Endothelial cell of umbilical vein (primary cell): ENCODE measurements at regions of chr7 and their contacts with region 1.

Region 1: DNA sequence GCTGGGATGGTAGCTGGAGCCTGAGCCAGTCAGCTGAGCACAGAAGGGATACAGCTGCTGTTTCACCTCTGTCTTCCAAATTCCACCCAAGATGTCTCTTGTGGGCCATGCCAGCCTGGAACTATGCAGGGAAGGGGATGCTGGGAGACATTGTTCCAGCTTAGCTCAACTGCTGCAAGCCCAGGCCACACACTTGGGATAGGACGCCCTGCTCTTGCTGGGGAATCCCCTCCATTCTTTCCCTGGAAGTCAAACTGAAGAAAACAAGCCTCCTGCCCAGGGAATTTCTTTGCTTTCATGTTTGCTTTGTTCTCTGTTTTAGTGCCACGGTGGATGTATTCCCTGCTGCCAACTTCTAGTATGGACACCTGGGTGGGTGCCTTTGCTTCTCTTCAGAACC is 55.2 kb upstream of the CDK13 start:
- DNase-seq: peak; percentile 19
- H3K4me3 ChIP-seq: no peak overlapping the region
- H3K27ac ChIP-seq: no peak overlapping the region
- H3K4me1 ChIP-seq: no peaks in the 10 kb centered on the region
- H3K27me3 ChIP-seq: peaks cover 22 to 28% of the 10 kb centered on the region in 2 experiments
- CTCF ChIP-seq: no peak
- POLR2A ChIP-seq: no peak

Region 2: GRCh38 chr7:39880556-39880955 is 14.3 kb before region 1 on chr7:
- CTCF ChIA-PET with region 1: interaction called, 37 read pairs
- POLR2A ChIA-PET with region 1: no interaction called
- dilution Hi-C with region 1: no loop called
- intact Hi-C with region 1: no loop called
- DNase-seq: no peak
- H3K4me3 ChIP-seq: no peak overlapping the region
- H3K27ac ChIP-seq: no peak overlapping the region
- H3K4me1 ChIP-seq: no peaks in the 10 kb centered on the region
- H3K27me3 ChIP-seq: no peaks in the 10 kb centered on the region
- CTCF ChIP-seq: no peak
- POLR2A ChIP-seq: no peak

Region 3: DNA sequence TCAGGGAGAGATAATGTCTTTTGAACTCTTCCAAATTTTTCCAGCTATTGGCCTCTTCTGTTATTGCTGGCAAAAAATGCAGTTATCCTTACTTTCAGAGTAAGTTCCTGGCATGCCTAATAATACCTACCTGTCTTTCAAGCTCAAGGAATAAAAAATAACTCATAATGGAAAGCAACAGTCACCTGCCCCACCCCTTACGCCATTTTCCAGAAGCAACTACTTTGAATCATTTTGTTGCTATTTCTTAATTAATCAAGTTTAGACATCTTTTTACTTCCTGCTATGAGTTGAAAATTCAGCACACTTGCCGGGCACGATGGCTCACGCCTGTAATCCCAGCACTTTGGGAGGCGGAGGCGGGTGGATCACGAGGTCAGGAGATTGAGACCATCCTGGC is 32.1 kb after region 1 on chr7:
- CTCF ChIA-PET with region 1: interaction called, 14 read pairs
- POLR2A ChIA-PET with region 1: no interaction called
- dilution Hi-C with region 1: no loop called
- intact Hi-C with region 1: no loop called
- DNase-seq: no peak
- H3K4me3 ChIP-seq: no peak overlapping the region
- H3K27ac ChIP-seq: no peak overlapping the region
- H3K4me1 ChIP-seq: no peaks in the 10 kb centered on the region
- H3K27me3 ChIP-seq: peaks cover 4 to 13% of the 10 kb centered on the region in 2 experiments
- CTCF ChIP-seq: no peak
- POLR2A ChIP-seq: no peak

Region 4: GRCh38 chr7:39958038-39958437 is 63.1 kb after region 1 on chr7:
- CTCF ChIA-PET with region 1: interaction called, 10 read pairs
- POLR2A ChIA-PET with region 1: no interaction called
- dilution Hi-C with region 1: no loop called
- intact Hi-C with region 1: no loop called
- DNase-seq: no peak
- H3K4me3 ChIP-seq: no peak overlapping the region
- H3K27ac ChIP-seq: no peak overlapping the region
- H3K4me1 ChIP-seq: peaks cover 12% of the 10 kb centered on the region
- H3K27me3 ChIP-seq: no peaks in the 10 kb centered on the region
- CTCF ChIP-seq: no peak
- POLR2A ChIP-seq: no peak

Region 5: DNA sequence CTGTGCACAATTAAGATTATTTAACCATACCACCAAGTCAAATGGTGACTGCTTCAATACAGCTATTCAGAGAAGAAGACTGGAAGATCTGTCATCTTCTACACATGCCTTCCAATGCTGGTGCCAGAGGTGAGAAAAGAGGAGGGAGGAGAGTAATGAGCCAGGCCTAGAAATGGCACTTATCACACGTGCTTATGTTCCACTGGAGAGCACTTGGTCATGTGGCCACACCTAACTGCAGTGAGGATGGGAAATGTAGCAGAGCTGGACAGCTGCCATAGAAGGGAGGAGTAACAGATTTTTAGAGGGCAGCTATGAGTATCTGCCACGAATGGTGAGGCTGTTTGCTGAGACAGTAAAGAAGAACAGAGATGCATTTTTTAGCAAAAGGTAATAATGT is 162.4 kb after region 1 on chr7:
- CTCF ChIA-PET with region 1: interaction called, 270 read pairs
- POLR2A ChIA-PET with region 1: no interaction called
- dilution Hi-C with region 1: no loop called
- intact Hi-C with region 1: loop called (anchors 1 kb)
- DNase-seq: no peak
- H3K4me3 ChIP-seq: no peak overlapping the region
- H3K27ac ChIP-seq: no peak overlapping the region
- H3K4me1 ChIP-seq: no peaks in the 10 kb centered on the region
- H3K27me3 ChIP-seq: no peaks in the 10 kb centered on the region
- CTCF ChIP-seq: no peak
- POLR2A ChIP-seq: no peak

Region 6: DNA sequence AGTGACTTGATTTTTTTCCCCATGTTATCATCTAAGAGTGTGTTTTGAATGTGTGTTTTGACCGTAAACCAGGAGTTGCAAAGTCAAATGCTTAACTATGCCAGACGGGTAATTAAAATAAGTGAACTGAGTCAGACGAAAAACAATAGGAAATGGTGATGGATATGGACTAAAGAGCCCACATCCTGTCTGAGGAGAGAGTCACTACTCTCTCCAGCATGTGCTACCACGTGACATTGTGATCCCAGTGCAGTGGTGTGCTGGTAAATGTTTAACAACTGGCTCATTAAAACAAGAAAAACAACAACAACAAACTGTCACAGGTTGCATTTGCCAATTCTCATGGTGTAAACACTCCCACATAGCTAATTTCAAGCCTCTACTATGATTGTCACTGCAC is 404.2 kb after region 1 on chr7:
- CTCF ChIA-PET with region 1: no interaction called
- POLR2A ChIA-PET with region 1: no interaction called
- dilution Hi-C with region 1: no loop called
- intact Hi-C with region 1: no loop called
- DNase-seq: peak; percentile 97
- H3K4me3 ChIP-seq: no peak overlapping the region
- H3K27ac ChIP-seq: peak overlapping the region; percentile 98
- H3K4me1 ChIP-seq: peaks cover 48% of the 10 kb centered on the region
- H3K27me3 ChIP-seq: no peaks in the 10 kb centered on the region
- CTCF ChIP-seq: no peak
- POLR2A ChIP-seq: no peak

Region 7: GRCh38 chr7:41731492-41732435 is 1836.9 kb after region 1 on chr7:
- CTCF ChIA-PET with region 1: interaction called, 8 read pairs
- POLR2A ChIA-PET with region 1: no interaction called
- dilution Hi-C with region 1: no loop called
- intact Hi-C with region 1: loop called (anchors 5 kb)
- DNase-seq: peak; percentile 33
- H3K4me3 ChIP-seq: no peak overlapping the region
- H3K27ac ChIP-seq: no peak overlapping the region
- H3K4me1 ChIP-seq: no peaks in the 10 kb centered on the region
- H3K27me3 ChIP-seq: peaks cover 3 to 4% of the 10 kb centered on the region in 2 experiments
- CTCF ChIP-seq: peak; percentile 5 to 8
- POLR2A ChIP-seq: no peak